Heart left ventricle (tissue), 16 donors: ENCODE measurements at regions of chr2 and their contacts with region 1.

Region 1: GRCh38 chr2:196171248-196171871 is at the start of gene STK17B:
- DNase-seq: peak; percentile 95 to 98 (median 95)
- ATAC-seq: peak; percentile 96 to 99 (median 98)
- H3K4me3 ChIP-seq: peak within 1 kb of the TSS; percentile 64 to 98 (median 90)
- H3K27ac ChIP-seq: peak within 1 kb of the TSS; percentile 31 to 97 (median 80)
- H3K4me1 ChIP-seq: peaks cover 0 to 47% (median 15%) of the 10 kb centered on the region in 12 donors
- H3K27me3 ChIP-seq: no peaks in the 10 kb centered on the region
- CTCF ChIP-seq: peak in 3 of 12 donors; percentile 5 to 28 (median 14)
- POLR2A ChIP-seq: peak; percentile 17 to 85
- total RNA-seq, gene STK17B: 3.3 to 24.4 (median 5.3) TPM

Region 2: DNA sequence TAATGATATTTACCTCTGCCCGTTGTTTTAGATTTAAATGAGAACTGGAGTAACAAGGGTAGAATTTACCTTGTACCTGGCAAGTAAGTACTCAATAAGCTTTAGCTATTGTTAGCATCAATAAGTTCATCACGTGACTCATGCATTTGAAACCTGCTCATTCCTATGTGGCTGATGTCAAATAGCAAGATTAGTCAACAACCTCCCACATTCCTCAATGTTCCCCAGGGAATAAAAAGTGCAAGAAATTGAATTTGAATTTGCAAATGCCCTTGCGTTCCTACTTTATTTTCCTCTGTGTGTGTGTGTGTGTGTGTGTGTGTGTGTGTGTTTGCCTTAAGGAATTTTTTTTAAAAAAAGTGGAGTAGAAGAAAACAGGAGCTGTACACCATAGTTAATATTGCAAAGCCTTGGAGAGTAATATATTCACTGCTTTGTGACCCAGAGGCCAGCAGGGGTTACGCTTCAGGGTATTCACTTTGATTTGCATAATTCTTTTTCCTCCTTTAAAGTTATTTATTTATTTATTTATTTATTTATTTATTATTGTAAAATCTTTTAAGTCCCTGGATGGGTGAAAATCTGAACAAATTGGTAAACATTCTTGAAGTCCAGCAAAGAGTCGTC is 58.8 kb before region 1 on chr2:
- intact Hi-C with region 1: no loop called
- DNase-seq: no peak
- ATAC-seq: no peak
- H3K4me3 ChIP-seq: peak overlapping the region in 2 of 12 donors; percentile 1 to 4
- H3K27ac ChIP-seq: peak overlapping the region in 10 of 12 donors; percentile 7 to 76 (median 58)
- H3K4me1 ChIP-seq: peaks cover 0 to 26% (median 8%) of the 10 kb centered on the region in 12 donors
- H3K27me3 ChIP-seq: no peaks in the 10 kb centered on the region
- CTCF ChIP-seq: no peak
- POLR2A ChIP-seq: no peak

Region 3: DNA sequence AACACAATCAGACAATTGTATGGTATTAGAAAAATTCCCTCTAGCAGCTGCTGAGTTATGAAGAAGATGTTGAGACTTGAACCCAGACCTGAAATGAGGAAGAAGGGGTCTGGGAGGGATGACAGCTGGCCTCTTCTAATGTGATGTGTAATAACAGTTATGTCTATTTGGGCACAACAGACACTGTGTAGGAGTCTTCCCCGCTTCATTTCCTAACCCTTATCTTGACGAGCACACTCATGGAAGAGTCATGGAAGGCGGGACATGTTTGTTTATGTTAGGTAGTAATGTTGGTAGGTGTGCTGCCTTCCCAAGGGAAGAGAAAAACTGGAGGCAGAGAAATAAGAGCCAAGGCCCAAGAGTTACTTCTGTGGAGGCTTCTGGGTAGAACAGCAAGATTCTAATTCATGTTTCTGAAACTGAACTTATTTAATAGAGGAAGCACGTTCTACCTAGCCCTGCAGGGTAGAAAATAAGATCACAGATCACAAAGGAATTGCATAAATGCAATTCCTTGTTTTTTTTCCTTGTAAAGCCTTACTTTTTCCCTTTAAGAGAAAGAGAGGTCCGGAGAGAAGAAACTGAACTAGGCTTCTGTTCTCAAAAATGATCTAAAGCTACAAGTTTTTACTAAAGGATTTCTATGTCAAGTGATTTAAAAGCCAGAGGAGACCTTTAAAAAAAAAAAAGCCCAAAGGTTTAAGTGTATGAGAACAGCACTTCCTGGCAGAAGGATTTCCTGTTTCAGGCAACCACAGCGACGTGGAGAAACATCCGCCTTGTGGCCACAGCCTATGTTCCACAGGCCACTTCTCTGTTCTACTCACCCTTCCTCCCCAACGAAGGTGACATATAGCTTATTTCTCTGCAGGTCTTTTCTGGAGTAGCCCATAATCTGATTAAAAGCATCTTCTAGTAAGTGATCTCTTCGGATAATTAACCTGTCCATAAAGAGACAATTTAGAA is 68.5 kb after region 1 on chr2:
- intact Hi-C with region 1: loop called in 1 of 10 experiments (anchors 5 kb)
- DNase-seq: peak; percentile 63 to 79 (median 71)
- ATAC-seq: peak; percentile 75 to 93 (median 83)
- H3K4me3 ChIP-seq: no peak overlapping the region
- H3K27ac ChIP-seq: peak overlapping the region; percentile 46 to 93 (median 65)
- H3K4me1 ChIP-seq: peaks cover 0 to 63% (median 10%) of the 10 kb centered on the region in 12 donors
- H3K27me3 ChIP-seq: no peaks in the 10 kb centered on the region
- CTCF ChIP-seq: peak in 6 of 12 donors; percentile 12 to 39 (median 18)
- POLR2A ChIP-seq: no peak

Region 4: DNA sequence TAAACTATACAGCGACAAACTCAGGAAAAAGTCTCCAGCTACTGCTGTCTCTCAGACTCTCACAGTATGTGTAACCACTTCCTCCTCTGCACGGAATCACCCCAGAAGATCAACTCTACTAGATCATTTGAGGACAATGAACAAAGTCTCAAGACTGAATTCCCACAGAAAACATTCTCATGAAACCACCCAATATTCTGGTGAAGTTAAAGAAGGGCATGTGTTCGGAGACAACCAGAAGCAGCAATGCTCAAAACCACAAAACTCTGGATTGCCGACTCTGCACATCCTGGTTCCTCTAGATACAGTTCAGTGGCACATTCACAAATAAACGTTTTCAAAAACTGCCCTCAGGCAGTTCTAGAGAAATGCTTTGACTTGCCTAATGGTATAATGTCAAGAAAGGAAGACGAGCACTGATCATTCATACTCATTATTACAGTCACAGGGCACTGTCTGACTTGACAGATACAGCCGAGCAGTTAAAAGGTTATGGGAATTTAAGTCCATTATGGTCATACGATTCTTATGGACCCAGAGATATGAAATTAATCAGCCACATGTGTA is 91.9 kb after region 1 on chr2:
- intact Hi-C with region 1: loop called in 2 of 10 experiments (anchors 5 kb)
- DNase-seq: no peak
- ATAC-seq: peak; percentile 52 to 82 (median 70)
- H3K4me3 ChIP-seq: no peak overlapping the region
- H3K27ac ChIP-seq: peak overlapping the region in 1 of 12 donors; percentile 83
- H3K4me1 ChIP-seq: peaks cover 0 to 67% (median 18%) of the 10 kb centered on the region in 12 donors
- H3K27me3 ChIP-seq: no peaks in the 10 kb centered on the region
- CTCF ChIP-seq: no peak
- POLR2A ChIP-seq: no peak

Region 5: DNA sequence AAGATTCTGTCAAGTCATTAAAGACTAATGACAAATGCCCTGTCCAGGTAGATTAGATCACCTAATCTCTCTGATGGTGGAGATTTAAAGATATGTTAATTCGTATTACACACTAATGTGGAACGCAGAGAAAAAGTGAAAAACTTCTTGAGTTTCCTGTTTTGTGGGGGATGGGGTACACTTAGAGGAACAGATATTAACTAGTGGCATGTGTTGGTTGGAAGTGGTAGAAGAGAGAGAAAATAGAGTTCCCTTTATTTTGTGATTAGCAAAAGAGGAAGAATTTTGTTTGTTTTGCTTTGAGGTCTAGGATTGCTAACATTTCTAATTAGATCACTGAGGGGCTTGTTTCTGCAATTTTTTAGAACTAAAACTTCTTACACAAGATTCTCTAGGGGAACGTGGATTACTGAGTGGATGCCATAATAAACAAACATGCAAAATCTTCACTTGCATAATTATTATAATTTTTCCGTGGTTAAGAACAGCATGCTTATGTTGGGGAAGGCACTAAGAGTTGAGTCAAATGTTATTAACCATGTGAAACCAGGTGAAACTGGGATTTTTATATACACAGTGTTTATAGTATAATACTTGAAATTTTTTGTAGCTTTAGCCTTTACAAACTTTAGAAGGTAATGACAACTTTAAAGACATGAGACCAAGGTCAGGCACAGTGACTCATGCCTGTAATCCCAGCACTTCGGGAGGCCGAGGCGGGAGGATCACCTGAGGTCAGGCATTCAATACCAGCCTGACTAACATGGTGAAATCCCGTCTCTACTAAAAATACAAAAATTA is 97.4 kb after region 1 on chr2:
- intact Hi-C with region 1: loop called in 3 of 10 experiments (anchors 5 to 10 kb)
- DNase-seq: no peak
- ATAC-seq: peak; percentile 59 to 75 (median 66)
- H3K4me3 ChIP-seq: peak overlapping the region in 1 of 12 donors; percentile 27
- H3K27ac ChIP-seq: peak overlapping the region in 10 of 12 donors; percentile 21 to 91 (median 38)
- H3K4me1 ChIP-seq: peaks cover 0 to 53% (median 27%) of the 10 kb centered on the region in 12 donors
- H3K27me3 ChIP-seq: no peaks in the 10 kb centered on the region
- CTCF ChIP-seq: no peak
- POLR2A ChIP-seq: no peak

Region 6: DNA sequence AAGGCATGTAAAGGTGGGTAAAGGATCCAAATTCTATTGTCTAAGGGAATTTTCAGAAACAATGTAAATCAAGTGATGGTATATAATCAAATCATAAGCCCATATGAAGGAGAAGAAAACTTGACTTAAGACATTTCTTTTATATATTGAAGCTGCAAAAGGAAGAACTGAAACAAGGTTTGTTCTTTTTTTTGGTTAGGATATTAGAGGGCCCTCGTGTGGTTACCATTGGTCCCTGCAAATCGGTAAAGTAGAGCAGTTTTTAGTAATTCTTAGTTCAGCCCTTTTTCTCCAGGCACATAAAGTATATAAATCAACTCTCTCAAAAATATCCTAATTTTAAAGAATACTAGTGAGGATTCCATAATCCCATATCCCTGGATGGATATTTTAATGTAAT is 105.6 kb after region 1 on chr2:
- intact Hi-C with region 1: loop called in 2 of 10 experiments (anchors 5 to 10 kb)
- DNase-seq: no peak
- ATAC-seq: no peak
- H3K4me3 ChIP-seq: no peak overlapping the region
- H3K27ac ChIP-seq: no peak overlapping the region
- H3K4me1 ChIP-seq: peaks cover 0 to 40% (median 12%) of the 10 kb centered on the region in 12 donors
- H3K27me3 ChIP-seq: no peaks in the 10 kb centered on the region
- CTCF ChIP-seq: peak; percentile 30 to 62 (median 49)
- POLR2A ChIP-seq: no peak